ENCODE measurements at regions of chr6 and their contacts with region 1.

Region 1: DNA sequence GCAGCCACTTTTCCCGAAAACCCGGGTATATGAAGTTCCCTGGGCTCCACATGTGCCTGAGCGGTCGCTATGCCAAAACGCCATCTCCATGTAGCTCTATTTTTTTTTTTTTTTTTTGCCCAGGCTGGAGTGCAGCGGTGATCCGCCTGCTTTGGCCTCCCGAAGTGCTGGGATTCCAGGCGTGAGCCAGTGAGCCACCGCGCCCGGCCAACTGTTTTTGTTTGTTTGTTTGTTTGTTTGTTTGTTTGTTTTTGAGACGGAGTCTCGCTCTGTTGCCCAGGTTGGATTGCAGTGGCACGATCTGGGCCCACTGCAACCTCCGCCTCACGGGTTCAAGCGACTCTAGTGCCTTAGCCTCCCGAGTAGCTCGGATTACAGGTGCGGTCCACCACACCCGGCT is 237.5 kb upstream of the IRAK1BP1 start:
- DNase-seq: no peak
- H3K4me3 ChIP-seq: peak overlapping the region in 1 of 3 donors; percentile 40
- H3K27ac ChIP-seq: no peak overlapping the region
- H3K4me1 ChIP-seq: no peaks in the 10 kb centered on the region
- H3K27me3 ChIP-seq: no peaks in the 10 kb centered on the region
- CTCF ChIP-seq: no peak
- POLR2A ChIP-seq: no peak

Region 2: GRCh38 chr6:76719449-76719848 is 1910.4 kb before region 1 on chr6:
- intact Hi-C with region 1: loop called (anchors 5 kb)
- DNase-seq: no peak
- H3K4me3 ChIP-seq: no peak overlapping the region
- H3K27ac ChIP-seq: no peak overlapping the region
- H3K4me1 ChIP-seq: no peaks in the 10 kb centered on the region
- H3K27me3 ChIP-seq: no peaks in the 10 kb centered on the region
- CTCF ChIP-seq: no peak
- POLR2A ChIP-seq: no peak

Region 3: GRCh38 chr6:78538002-78538401 is 91.8 kb before region 1 on chr6:
- intact Hi-C with region 1: no loop called
- DNase-seq: no peak
- H3K4me3 ChIP-seq: no peak overlapping the region
- H3K27ac ChIP-seq: no peak overlapping the region
- H3K4me1 ChIP-seq: no peaks in the 10 kb centered on the region
- H3K27me3 ChIP-seq: no peaks in the 10 kb centered on the region
- CTCF ChIP-seq: no peak
- POLR2A ChIP-seq: no peak

Region 4: GRCh38 chr6:79296225-79296624 is 666.4 kb after region 1 on chr6:
- intact Hi-C with region 1: no loop called
- DNase-seq: no peak
- H3K4me3 ChIP-seq: no peak overlapping the region
- H3K27ac ChIP-seq: no peak overlapping the region
- H3K4me1 ChIP-seq: no peaks in the 10 kb centered on the region
- H3K27me3 ChIP-seq: no peaks in the 10 kb centered on the region
- CTCF ChIP-seq: no peak
- POLR2A ChIP-seq: no peak

Measured in breast epithelium (tissue), 4 donors.